Naive thymus-derived CD4-positive, alpha-beta T cell (primary cell): ENCODE measurements at regions of chr20 and their contacts with region 1.

Region 1: GRCh38 chr20:3795511-3796468 is at the start of gene CDC25B:
- DNase-seq: peak; percentile 64 to 89 (median 84)
- ATAC-seq: peak; percentile 90
- H3K4me3 ChIP-seq: peak within 1 kb of the TSS; percentile 90
- H3K4me3 Mint-ChIP-seq: peak within 1 kb of the TSS; percentile 90 to 99 (median 98)
- H3K27ac ChIP-seq: peak within 1 kb of the TSS; percentile 95
- H3K27ac Mint-ChIP-seq: peak within 1 kb of the TSS; percentile 81 to 99 (median 97)
- H3K4me1 ChIP-seq: peaks cover 27 to 39% of the 10 kb centered on the region in 2 donors
- H3K4me1 Mint-ChIP-seq: peaks cover 24 to 43% (median 39%) of the 10 kb centered on the region in 7 donors
- H3K27me3 ChIP-seq: no peaks in the 10 kb centered on the region
- H3K27me3 Mint-ChIP-seq: peaks cover 0 to 7% (median 0%) of the 10 kb centered on the region in 5 donors
- total RNA-seq, gene CDC25B: 166 to 392 (median 281) TPM

Region 2: GRCh38 chr20:3492669-3493068 is 303.1 kb before region 1 on chr20:
- CTCF ChIA-PET with region 1: no interaction called
- POLR2A ChIA-PET with region 1: no interaction called
- intact Hi-C with region 1: no loop called
- DNase-seq: no peak
- ATAC-seq: no peak
- H3K4me3 ChIP-seq: no peak overlapping the region
- H3K4me3 Mint-ChIP-seq: no peak overlapping the region
- H3K27ac ChIP-seq: no peak overlapping the region
- H3K27ac Mint-ChIP-seq: no peak overlapping the region
- H3K4me1 ChIP-seq: no peaks in the 10 kb centered on the region
- H3K4me1 Mint-ChIP-seq: peaks cover 0 to 19% (median 16%) of the 10 kb centered on the region in 7 donors
- H3K27me3 ChIP-seq: no peaks in the 10 kb centered on the region
- H3K27me3 Mint-ChIP-seq: no peaks in the 10 kb centered on the region

Region 3: DNA sequence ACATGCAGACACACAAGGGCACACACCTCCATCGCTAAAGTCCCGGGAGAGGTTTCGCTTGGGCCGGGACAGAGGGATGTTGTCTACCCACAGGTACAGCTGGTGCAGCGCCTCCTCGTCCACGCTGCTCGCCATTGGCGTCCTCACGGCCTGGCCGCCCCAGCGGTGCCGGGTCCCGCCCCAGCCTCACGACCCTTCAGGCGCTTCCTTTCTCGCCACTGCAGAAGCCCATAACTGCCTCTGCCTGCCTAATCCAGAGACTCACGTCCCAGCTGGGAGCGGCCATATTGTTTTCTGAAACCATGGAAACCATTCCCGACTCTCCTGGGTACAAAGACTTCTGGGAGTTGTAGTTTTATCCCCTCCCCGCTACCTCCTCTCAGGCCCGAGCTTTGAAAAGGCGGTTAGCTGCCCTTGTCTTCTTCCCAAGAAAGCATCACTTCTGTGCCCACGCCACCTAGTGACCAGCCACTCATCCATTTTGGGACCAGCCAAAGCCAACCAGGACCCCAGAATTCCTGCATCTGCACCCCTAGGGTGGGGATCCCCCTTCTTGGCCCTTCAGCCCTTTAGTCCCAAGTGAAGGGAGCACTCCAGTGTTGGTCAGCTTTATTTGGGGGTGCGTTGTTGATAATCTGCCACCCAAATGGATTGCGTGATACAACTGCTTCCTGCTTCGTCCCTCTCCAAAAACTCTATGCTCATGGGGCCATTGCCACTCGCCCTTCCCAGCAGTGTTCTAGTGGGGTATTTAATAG is 14.5 kb before region 1 on chr20 and contains the start of gene SPEF1:
- CTCF ChIA-PET with region 1: interaction called, 3 read pairs
- POLR2A ChIA-PET with region 1: interaction called, 24 read pairs
- intact Hi-C with region 1: loop called in 1 of 2 experiments (anchors 1 kb)
- DNase-seq: peak in 5 of 9 donors; percentile 38 to 56 (median 50)
- ATAC-seq: peak; percentile 67
- H3K4me3 ChIP-seq: peak within 1 kb of the TSS; percentile 24
- H3K4me3 Mint-ChIP-seq: peak within 1 kb of the TSS; percentile 1 to 81 (median 61)
- H3K27ac ChIP-seq: peak within 1 kb of the TSS; percentile 28
- H3K27ac Mint-ChIP-seq: peak within 1 kb of the TSS in 7 of 9 donors; percentile 25 to 78 (median 67)
- H3K4me1 ChIP-seq: peaks cover 4 to 10% of the 10 kb centered on the region in 2 donors
- H3K4me1 Mint-ChIP-seq: peaks cover 22 to 51% (median 44%) of the 10 kb centered on the region in 7 donors
- H3K27me3 ChIP-seq: no peaks in the 10 kb centered on the region
- H3K27me3 Mint-ChIP-seq: peaks cover 0 to 29% (median 0%) of the 10 kb centered on the region in 5 donors
- total RNA-seq, gene SPEF1: 0.24 to 0.32 (median 0.29) TPM in 3 of 5 experiments, not detected in the others

Region 4: GRCh38 chr20:3811467-3812258 is 15.9 kb after region 1 on chr20:
- CTCF ChIA-PET with region 1: interaction called, 45 read pairs
- POLR2A ChIA-PET with region 1: interaction called, 134 read pairs
- intact Hi-C with region 1: loop called (anchors 1 kb)
- DNase-seq: peak; percentile 79 to 96 (median 91)
- ATAC-seq: peak; percentile 97
- H3K4me3 ChIP-seq: peak overlapping the region; percentile 62
- H3K4me3 Mint-ChIP-seq: peak overlapping the region; percentile 77 to 96 (median 90)
- H3K27ac ChIP-seq: peak overlapping the region; percentile 84
- H3K27ac Mint-ChIP-seq: peak overlapping the region; percentile 94 to 100 (median 98)
- H3K4me1 ChIP-seq: peaks cover 70% of the 10 kb centered on the region in 2 donors
- H3K4me1 Mint-ChIP-seq: peaks cover 56 to 80% (median 71%) of the 10 kb centered on the region in 7 donors
- H3K27me3 ChIP-seq: no peaks in the 10 kb centered on the region
- H3K27me3 Mint-ChIP-seq: no peaks in the 10 kb centered on the region

Region 5: GRCh38 chr20:3846740-3847428 is 51.1 kb after region 1 on chr20 and contains the start of gene MAVS:
- CTCF ChIA-PET with region 1: no interaction called
- POLR2A ChIA-PET with region 1: no interaction called
- intact Hi-C with region 1: loop called in 1 of 2 experiments (anchors 1 kb)
- DNase-seq: peak; percentile 76 to 93 (median 82)
- ATAC-seq: peak; percentile 100
- H3K4me3 ChIP-seq: peak within 1 kb of the TSS; percentile 86
- H3K4me3 Mint-ChIP-seq: peak within 1 kb of the TSS; percentile 85 to 93 (median 90)
- H3K27ac ChIP-seq: peak within 1 kb of the TSS; percentile 96
- H3K27ac Mint-ChIP-seq: peak within 1 kb of the TSS; percentile 59 to 95 (median 90)
- H3K4me1 ChIP-seq: peaks cover 0 to 10% of the 10 kb centered on the region in 2 donors
- H3K4me1 Mint-ChIP-seq: peaks cover 16 to 30% (median 27%) of the 10 kb centered on the region in 7 donors
- H3K27me3 ChIP-seq: no peaks in the 10 kb centered on the region
- H3K27me3 Mint-ChIP-seq: no peaks in the 10 kb centered on the region
- total RNA-seq, gene MAVS: 23.3 to 49.9 (median 41.5) TPM

Region 6: GRCh38 chr20:3854462-3854871 is 58.7 kb after region 1 on chr20:
- CTCF ChIA-PET with region 1: interaction called, 4 read pairs
- POLR2A ChIA-PET with region 1: interaction called, 4 read pairs
- intact Hi-C with region 1: loop called in 1 of 2 experiments (anchors 1 kb)
- DNase-seq: no peak
- ATAC-seq: peak; percentile 48
- H3K4me3 ChIP-seq: no peak overlapping the region
- H3K4me3 Mint-ChIP-seq: no peak overlapping the region
- H3K27ac ChIP-seq: no peak overlapping the region
- H3K27ac Mint-ChIP-seq: peak overlapping the region in 3 of 9 donors; percentile 33 to 41 (median 33)
- H3K4me1 ChIP-seq: peaks cover 0 to 3% of the 10 kb centered on the region in 2 donors
- H3K4me1 Mint-ChIP-seq: peaks cover 12 to 22% (median 16%) of the 10 kb centered on the region in 7 donors
- H3K27me3 ChIP-seq: no peaks in the 10 kb centered on the region
- H3K27me3 Mint-ChIP-seq: no peaks in the 10 kb centered on the region

Region 7: DNA sequence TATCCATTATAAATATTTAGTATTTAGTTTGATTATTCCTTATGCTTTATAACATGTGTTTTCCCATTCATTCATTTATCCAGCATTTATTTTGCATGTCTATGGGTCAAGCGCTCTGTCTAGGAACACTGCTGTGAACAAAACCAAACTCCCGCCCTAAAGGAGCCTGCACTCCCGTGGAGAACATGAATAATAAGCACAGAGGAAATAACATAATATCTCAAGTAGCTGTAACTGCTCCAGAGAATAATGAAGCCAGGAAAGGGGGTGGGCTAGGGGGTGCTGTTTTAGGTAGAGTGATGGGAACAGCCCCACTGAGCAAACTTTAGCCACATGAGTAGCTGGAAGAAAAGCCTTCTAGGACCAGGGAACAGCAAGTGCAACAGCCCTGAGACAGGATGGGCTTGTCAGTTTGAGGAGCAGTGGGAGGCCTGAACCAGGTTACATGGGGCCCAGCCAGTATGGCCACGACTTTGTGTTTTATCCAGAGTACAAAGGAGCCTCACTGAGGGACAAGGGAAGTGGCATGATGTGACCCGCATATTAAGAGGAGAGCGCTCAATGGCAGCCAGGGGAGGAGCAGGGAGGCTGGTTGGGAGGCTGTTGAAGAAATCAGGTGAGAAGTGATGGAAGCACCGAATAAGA is 901.5 kb after region 1 on chr20:
- CTCF ChIA-PET with region 1: no interaction called
- POLR2A ChIA-PET with region 1: no interaction called
- intact Hi-C with region 1: no loop called
- DNase-seq: no peak
- ATAC-seq: no peak
- H3K4me3 ChIP-seq: no peak overlapping the region
- H3K4me3 Mint-ChIP-seq: no peak overlapping the region
- H3K27ac ChIP-seq: no peak overlapping the region
- H3K27ac Mint-ChIP-seq: peak overlapping the region in 4 of 9 donors; percentile 0 to 60 (median 26)
- H3K4me1 ChIP-seq: peaks cover 0 to 6% of the 10 kb centered on the region in 2 donors
- H3K4me1 Mint-ChIP-seq: peaks cover 13 to 43% (median 32%) of the 10 kb centered on the region in 7 donors
- H3K27me3 ChIP-seq: no peaks in the 10 kb centered on the region
- H3K27me3 Mint-ChIP-seq: no peaks in the 10 kb centered on the region